Activated naive CD4-positive, alpha-beta T cell treated with anti-CD3 and anti-CD28 coated beads for 36 hours (primary cell): ENCODE measurements at regions of chr21 and their contacts with region 1.

Region 1: GRCh38 chr21:31185663-31186062 is 147.4 kb upstream of the KRTAP19-8 start:
- DNase-seq: peak; percentile 43
- H3K4me3 Mint-ChIP-seq: peak overlapping the region; percentile 70
- H3K27ac Mint-ChIP-seq: peak overlapping the region; percentile 98
- H3K4me1 Mint-ChIP-seq: peaks cover 76% of the 10 kb centered on the region
- H3K27me3 Mint-ChIP-seq: no peaks in the 10 kb centered on the region

Region 2: GRCh38 chr21:31659536-31660258 is 474.0 kb after region 1 on chr21 and contains the start of gene SOD1:
- CTCF ChIA-PET with region 1: interaction called, 3 read pairs
- intact Hi-C with region 1: loop called (anchors 2 kb)
- DNase-seq: peak; percentile 95
- H3K4me3 Mint-ChIP-seq: peak within 1 kb of the TSS; percentile 100
- H3K27ac Mint-ChIP-seq: peak within 1 kb of the TSS; percentile 99
- H3K4me1 Mint-ChIP-seq: peaks cover 68% of the 10 kb centered on the region
- H3K27me3 Mint-ChIP-seq: no peaks in the 10 kb centered on the region
- total RNA-seq, gene SOD1: 281 to 297 TPM